Dorsolateral prefrontal cortex (tissue), 120 donors: ENCODE measurements at regions of chr7 and their contacts with region 1.

Region 1: GRCh38 chr7:131107337-131108211 is 220.1 kb upstream of the MKLN1 start:
- DNase-seq: peak in 9 of 10 donors; percentile 80 to 89 (median 83)
- H3K4me3 ChIP-seq: peak overlapping the region; percentile 66 to 100 (median 99)
- H3K27ac ChIP-seq: peak overlapping the region; percentile 96 to 100 (median 100)
- H3K27me3 ChIP-seq: no peaks in the 10 kb centered on the region
- CTCF ChIP-seq: peak in 28 of 56 donors; percentile 5 to 43 (median 25)

Region 2: GRCh38 chr7:129845178-129845971 is 1262.2 kb before region 1 on chr7:
- intact Hi-C with region 1: no loop called
- DNase-seq: no peak
- H3K4me3 ChIP-seq: no peak overlapping the region
- H3K27ac ChIP-seq: peak overlapping the region in 1 of 59 donors; percentile 33
- H3K27me3 ChIP-seq: no peaks in the 10 kb centered on the region
- CTCF ChIP-seq: no peak

Region 3: DNA sequence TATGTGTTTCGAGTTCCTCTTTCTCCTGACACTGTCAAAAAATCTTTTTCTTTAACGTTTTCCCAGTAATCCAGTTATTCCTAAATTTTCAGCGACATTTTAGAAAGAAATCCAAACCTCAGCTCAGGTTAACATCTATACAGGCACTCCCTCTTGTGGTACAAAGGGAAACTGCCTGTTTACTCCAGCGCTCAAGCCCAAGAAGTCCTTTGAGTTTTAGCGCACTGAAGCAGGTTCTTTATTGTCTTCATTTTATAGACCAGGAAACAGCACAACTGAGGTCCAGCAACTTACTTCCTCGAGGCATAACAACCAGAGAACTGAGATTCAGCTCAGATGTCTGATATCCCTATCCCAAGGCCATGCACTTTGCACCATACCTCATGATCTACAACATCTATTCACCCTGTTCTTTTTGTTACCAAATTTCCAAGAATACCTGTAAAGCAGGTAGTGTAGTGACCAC is 67.1 kb before region 1 on chr7:
- intact Hi-C with region 1: no loop called
- DNase-seq: peak in 4 of 10 donors; percentile 35 to 55 (median 50)
- H3K4me3 ChIP-seq: peak overlapping the region in 31 of 59 donors; percentile 1 to 43 (median 19)
- H3K27ac ChIP-seq: peak overlapping the region in 49 of 59 donors; percentile 3 to 80 (median 51)
- H3K27me3 ChIP-seq: no peaks in the 10 kb centered on the region
- CTCF ChIP-seq: peak; percentile 78 to 96 (median 90)

Region 4: GRCh38 chr7:131124001-131124629 is 16.5 kb after region 1 on chr7:
- intact Hi-C with region 1: no loop called
- DNase-seq: no peak
- H3K4me3 ChIP-seq: no peak overlapping the region
- H3K27ac ChIP-seq: no peak overlapping the region
- H3K27me3 ChIP-seq: no peaks in the 10 kb centered on the region
- CTCF ChIP-seq: no peak

Region 5: GRCh38 chr7:131157530-131158243 is 50.1 kb after region 1 on chr7:
- intact Hi-C with region 1: loop called in 1 of 2 experiments (anchors 5 kb)
- DNase-seq: peak in 6 of 10 donors; percentile 9 to 53 (median 46)
- H3K4me3 ChIP-seq: peak overlapping the region in 3 of 59 donors; percentile 6 to 26 (median 15)
- H3K27ac ChIP-seq: peak overlapping the region in 50 of 59 donors; percentile 4 to 86 (median 50)
- H3K27me3 ChIP-seq: no peaks in the 10 kb centered on the region
- CTCF ChIP-seq: no peak

Region 6: DNA sequence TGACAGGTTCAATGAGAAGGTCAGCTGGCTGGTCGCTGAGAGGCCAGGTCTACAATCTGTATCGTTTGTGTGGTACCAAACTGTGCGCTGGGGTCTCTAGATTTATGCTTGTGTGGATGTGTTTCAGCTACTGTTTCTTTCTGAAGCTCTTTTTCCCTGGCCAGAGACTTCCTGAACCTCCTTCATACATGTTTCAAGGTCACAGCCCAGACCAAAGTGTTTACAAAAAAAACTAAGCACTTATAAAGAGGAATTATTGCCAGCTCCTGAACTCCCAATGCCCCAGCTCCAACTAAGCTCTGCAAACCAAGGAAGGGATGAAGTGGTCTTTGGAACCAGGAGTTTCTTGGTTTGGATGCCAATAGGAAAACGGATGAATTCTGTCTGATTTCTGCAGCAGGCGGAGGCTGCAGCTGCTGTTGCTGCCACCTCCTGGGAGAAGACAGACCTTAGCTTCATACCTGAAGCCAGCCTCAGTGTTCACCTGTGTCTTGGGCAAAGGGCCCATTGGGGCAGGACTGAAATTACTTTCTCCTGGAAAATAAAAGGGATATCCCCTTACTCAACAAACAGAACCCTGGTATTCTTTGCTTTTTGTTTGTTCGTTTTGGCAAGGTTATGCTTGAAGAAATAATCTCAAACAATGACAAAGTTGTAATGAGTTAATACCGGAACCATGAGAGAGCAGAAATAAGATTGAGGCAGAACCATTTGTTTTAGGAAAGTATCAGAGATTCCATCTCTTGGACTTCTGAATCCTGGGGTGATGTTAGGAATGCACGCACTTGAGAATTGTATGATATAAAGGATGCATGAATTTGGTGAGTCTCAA is 195.5 kb after region 1 on chr7:
- intact Hi-C with region 1: loop called in 1 of 2 experiments (anchors 2 kb)
- DNase-seq: peak in 8 of 10 donors; percentile 16 to 59 (median 46)
- H3K4me3 ChIP-seq: no peak overlapping the region
- H3K27ac ChIP-seq: peak overlapping the region in 47 of 59 donors; percentile 2 to 78 (median 40)
- H3K27me3 ChIP-seq: no peaks in the 10 kb centered on the region
- CTCF ChIP-seq: peak in 55 of 56 donors; percentile 37 to 73 (median 60)

Region 7: DNA sequence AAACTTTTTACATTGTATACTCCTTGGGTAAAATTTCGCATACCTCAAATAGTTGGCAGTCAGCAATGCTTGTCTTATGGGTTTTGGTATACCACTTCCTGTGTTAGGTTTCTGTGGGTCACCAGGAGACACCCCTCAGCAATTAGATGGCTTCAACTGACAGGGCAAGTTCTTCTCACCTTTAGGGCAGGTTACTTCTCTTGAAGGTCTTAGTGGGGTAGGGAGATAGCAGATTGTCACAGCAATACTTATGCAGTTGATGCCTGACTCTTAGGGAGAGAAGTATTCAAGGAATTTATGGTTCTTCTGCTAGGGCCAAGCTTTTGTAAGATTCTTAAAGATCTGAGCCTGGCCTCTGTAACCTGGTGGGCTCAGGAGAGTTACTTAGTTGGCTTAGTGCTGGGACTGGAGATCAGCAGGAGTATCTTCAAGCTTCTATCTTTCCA is 263.0 kb after region 1 on chr7:
- intact Hi-C with region 1: no loop called
- DNase-seq: no peak
- H3K4me3 ChIP-seq: no peak overlapping the region
- H3K27ac ChIP-seq: no peak overlapping the region
- H3K27me3 ChIP-seq: no peaks in the 10 kb centered on the region
- CTCF ChIP-seq: no peak

Region 8: DNA sequence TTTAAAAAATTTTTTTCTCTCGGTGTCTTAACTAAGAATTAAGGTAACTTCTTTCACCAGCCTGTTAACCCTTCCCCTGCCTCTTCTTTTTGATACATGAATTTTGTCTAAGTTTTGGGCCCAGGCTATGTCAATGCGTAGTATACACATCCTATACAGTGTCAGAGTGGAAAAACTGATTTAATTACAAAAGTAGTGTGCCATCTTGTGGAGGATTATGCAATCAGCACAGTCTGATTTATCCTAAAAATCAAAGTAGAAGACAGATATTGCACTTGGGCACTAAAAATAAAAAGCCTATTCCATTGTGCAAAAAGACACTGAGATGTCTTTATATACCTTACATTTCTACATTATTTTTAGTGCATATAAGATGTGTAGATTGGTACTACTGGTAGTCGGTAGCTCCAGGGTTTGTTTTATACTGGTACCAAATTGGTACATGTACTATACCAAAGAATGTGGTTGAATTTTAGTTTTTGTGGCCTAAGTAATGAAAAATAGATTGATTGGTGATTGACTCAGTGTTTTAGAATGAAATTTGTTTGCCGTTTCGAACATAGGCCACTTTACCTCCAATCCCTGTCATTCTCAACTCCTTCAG is 316.7 kb after region 1 on chr7:
- intact Hi-C with region 1: loop called (anchors 2 to 5 kb)
- DNase-seq: no peak
- H3K4me3 ChIP-seq: no peak overlapping the region
- H3K27ac ChIP-seq: peak overlapping the region in 57 of 59 donors; percentile 13 to 94 (median 85)
- H3K27me3 ChIP-seq: no peaks in the 10 kb centered on the region
- CTCF ChIP-seq: peak; percentile 59 to 90 (median 79)

Region 9: GRCh38 chr7:131513245-131514061 is 405.9 kb after region 1 on chr7:
- intact Hi-C with region 1: loop called (anchors 5 kb)
- DNase-seq: peak; percentile 74 to 88 (median 84)
- H3K4me3 ChIP-seq: peak overlapping the region in 15 of 59 donors; percentile 4 to 47 (median 25)
- H3K27ac ChIP-seq: peak overlapping the region in 43 of 59 donors; percentile 3 to 81 (median 48)
- H3K27me3 ChIP-seq: no peaks in the 10 kb centered on the region
- CTCF ChIP-seq: peak; percentile 63 to 98 (median 94)